ENCODE measurements at regions of chr19 and their contacts with region 1.

Region 1: DNA sequence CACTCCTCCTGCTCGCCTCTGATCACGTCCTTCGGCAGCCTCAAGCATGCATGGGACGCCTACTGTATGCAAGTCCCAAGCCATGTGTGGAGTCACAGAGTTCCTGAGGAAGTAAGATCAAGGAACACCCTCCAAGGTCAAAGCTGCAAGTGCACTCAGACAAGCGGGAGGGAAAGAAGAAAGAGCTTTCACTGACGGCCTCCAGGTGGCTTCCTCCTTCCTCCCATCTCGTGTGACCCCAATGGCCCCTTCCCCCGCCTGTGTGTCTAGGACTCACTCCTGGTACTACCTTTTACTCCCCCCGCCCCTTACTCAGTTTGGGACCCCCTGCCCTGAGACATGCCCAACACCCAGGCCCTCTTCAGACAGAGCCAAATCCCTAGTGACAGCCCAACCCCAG is 6.0 kb downstream of the HAUS8 start:
- DNase-seq: no peak
- ATAC-seq: no peak

Region 2: GRCh38 chr19:17164639-17165038 is 95.4 kb after region 1 on chr19:
- intact Hi-C with region 1: loop called (anchors 5 kb)
- DNase-seq: no peak
- ATAC-seq: no peak

Region 3: DNA sequence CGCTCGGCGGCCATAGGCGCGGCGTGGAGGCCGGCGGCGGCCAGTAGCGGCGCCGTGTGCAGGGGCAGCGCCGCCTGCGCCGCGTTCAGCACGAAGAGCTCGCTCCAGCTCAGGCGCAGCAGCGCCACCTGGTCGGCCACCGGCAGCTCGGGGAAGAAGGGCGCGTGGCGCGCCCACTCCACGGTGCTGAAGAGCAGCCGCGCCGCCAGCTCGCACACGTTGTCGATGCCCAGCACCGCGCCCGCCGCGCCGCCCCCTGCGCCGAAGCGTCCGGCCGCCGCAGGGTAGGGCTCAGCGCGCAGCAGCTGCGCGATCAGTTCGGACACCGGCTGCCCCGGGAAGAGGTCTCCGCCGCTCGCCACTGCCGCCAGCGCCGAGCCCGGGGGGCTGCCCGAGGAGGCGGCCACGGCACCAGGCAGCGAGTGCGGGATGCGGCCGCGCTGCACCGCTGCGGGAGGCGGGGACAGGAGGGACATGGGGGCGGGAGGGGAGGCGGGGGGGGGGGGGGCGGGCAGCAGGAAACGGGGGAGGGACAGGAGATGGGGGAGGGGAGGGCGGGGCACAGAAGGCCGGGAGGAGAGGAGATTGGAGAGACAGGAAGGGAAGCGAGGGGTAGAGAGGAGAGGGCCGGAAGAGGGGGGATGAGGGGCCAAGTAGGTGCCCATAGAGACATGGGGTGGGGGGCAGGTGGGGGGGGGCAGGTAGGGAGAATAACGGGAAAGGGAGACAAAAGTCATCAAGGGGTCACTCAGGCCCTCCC is 166.6 kb after region 1 on chr19:
- intact Hi-C with region 1: loop called (anchors 1 kb)
- DNase-seq: peak; percentile 87
- ATAC-seq: peak; percentile 86